Activated T-helper 2 cell treated with anti-CD3 and anti-CD28 coated beads, Interferon-gamma antibody, Interleukin-2, Interleukin-4, amounts not matched to agents 10 μg/mL and 5 μg/mL and 100 μg/mL, durations not matched to agents 14 hours and 24 hours and 36 hours (primary cell): ENCODE measurements at regions of chr11 and their contacts with region 1.

Region 1: GRCh38 chr11:102666331-102666957 is 39.1 kb downstream of the MMP27 start:
- DNase-seq: no peak
- H3K4me3 Mint-ChIP-seq: no peak overlapping the region
- H3K27ac Mint-ChIP-seq: no peak overlapping the region
- H3K4me1 Mint-ChIP-seq: no peaks in the 10 kb centered on the region
- H3K27me3 Mint-ChIP-seq: peaks cover 8% of the 10 kb centered on the region

Region 2: DNA sequence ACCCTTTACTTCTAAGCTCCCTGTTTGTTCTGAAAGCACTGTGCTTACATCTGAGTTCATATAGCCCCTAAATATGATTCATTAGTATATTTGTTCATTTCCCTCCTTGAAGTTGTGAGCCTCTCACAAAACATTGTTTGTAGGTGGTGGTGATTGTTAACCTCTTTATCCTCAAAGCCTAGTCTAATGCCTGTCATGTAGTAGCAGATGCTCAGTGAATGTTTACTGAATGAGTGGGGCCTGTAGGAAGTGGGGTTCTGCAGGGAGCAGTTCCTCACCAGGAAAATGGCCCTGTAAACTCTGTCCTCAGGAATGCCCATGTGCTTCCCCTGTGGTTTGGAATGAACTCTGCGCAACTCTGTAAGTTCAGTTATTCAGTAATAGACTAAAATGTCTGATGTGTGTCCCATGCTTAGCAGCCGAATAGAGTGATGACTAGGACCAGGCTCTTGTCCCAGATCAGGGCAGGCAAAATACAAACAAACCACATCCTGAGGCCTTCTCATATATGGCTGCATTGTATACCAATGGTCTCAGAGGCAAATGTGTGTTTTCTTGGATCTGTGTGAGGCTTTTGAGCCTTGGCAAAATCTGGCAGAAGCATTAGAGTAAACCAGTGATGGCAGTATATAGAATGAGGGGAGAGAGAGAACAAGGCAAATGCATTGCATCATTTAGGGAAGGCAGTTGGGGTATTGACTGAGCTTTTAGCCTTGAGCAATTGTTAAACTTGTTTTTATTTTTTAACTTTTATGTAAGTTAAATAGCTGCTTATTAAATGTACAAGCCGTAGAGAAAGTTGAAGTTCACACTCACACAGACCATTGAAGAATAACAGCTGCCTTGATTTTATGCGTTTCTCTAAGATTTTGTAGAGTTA is 440.5 kb before region 1 on chr11:
- intact Hi-C with region 1: no loop called
- DNase-seq: no peak
- H3K4me3 Mint-ChIP-seq: no peak overlapping the region
- H3K27ac Mint-ChIP-seq: no peak overlapping the region
- H3K4me1 Mint-ChIP-seq: no peaks in the 10 kb centered on the region
- H3K27me3 Mint-ChIP-seq: peaks cover 13% of the 10 kb centered on the region

Region 3: GRCh38 chr11:102341844-102342318 is 324.6 kb before region 1 on chr11:
- intact Hi-C with region 1: loop called (anchors 1 kb)
- DNase-seq: peak; percentile 56
- H3K4me3 Mint-ChIP-seq: no peak overlapping the region
- H3K27ac Mint-ChIP-seq: no peak overlapping the region
- H3K4me1 Mint-ChIP-seq: peaks cover 27% of the 10 kb centered on the region
- H3K27me3 Mint-ChIP-seq: no peaks in the 10 kb centered on the region